ENCODE measurements at regions of chr3 and their contacts with region 1.

Region 1: GRCh38 chr3:128487813-128488635 is 5.0 kb downstream of the GATA2 start:
- DNase-seq: peak; percentile 92

Region 2: GRCh38 chr3:128555098-128555825 is 67.2 kb after region 1 on chr3:
- intact Hi-C with region 1: loop called (anchors 2 kb)
- DNase-seq: no peak

Measured in cardiac septum (tissue), 1 donor.